ENCODE measurements at regions of chr17 and their contacts with region 1.

Region 1: DNA sequence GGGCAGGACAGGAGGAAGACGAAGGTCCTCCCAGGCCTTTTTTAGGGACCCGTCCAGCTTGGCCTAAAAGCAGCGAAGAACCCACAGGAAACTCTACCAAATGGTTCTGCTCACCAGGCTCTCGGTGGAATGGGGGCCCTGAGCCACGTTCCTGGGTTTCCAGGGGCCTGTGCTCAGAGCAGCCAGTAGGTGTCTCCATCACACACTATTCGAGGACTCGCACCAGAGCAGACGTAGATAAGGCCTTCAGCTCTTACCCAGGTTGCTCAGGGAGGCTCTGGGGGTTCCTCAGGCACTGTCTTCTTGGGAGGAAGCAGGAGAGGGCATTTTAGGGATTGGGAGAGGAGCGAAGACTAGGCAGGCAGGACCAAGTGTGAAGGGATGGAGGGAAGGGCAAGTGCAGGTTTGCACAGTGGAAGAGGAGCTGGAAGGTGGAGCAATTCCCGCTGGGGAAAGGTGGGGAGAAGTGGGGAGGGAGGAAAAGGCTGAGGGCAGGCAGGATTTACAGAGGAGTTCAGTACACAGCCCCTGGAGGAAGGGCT is 157.1 kb downstream of the RGS9 start:
- DNase-seq: peak; percentile 73
- CTCF ChIP-seq: peak; percentile 72

Region 2: GRCh38 chr17:65556014-65556909 is 262.0 kb after region 1 on chr17:
- in situ Hi-C with region 1: loop called (anchors 5 kb)
- DNase-seq: peak; percentile 77
- CTCF ChIP-seq: peak; percentile 75

Region 3: DNA sequence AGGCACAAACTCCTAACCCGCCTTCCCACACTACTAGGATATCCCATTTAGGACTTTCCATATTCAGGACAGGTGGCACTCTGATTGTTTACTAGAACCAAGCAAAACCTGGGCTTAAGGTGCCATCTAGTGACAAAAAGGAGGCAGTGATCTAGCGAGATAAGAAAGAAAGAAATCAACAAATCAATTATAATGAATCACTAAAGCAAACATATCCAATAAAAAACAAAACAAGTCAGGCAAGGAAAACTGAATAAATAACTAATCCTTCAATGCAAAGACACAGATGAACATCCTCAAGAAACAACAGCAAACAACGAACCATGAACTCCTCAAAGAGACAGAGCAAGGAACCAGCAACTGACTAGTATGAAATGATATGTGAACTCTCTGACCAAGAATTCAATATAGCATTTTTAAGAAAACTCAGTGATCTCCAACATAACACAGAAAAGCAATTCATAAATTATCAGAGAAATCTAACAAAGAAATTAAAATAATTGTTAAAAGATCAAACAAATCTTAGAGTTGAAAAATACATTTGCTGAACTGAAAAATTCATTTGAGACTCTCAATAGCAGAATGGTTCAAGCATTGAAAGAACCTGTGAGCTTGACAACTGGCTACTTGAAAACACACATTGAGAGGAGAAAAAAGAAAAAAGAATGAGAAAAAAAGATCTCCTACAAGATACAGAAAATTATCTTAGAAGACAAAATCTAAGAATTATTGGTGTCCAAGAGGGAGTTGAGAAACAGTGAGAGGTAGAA is 694.0 kb after region 1 on chr17:
- in situ Hi-C with region 1: loop called (anchors 25 kb)
- DNase-seq: no peak
- CTCF ChIP-seq: no peak

Region 4: GRCh38 chr17:66165513-66166123 is 871.4 kb after region 1 on chr17:
- in situ Hi-C with region 1: loop called (anchors 25 kb)
- DNase-seq: peak; percentile 63
- CTCF ChIP-seq: peak; percentile 70

Measured in GM13976 (cell line).